GM18951 (cell line): ENCODE measurements at regions of chr4 and their contacts with region 1.

Region 1: GRCh38 chr4:159446266-159446976 is 343.5 kb downstream of the RAPGEF2 start:
- POLR2A ChIP-seq: no peak

Region 2: DNA sequence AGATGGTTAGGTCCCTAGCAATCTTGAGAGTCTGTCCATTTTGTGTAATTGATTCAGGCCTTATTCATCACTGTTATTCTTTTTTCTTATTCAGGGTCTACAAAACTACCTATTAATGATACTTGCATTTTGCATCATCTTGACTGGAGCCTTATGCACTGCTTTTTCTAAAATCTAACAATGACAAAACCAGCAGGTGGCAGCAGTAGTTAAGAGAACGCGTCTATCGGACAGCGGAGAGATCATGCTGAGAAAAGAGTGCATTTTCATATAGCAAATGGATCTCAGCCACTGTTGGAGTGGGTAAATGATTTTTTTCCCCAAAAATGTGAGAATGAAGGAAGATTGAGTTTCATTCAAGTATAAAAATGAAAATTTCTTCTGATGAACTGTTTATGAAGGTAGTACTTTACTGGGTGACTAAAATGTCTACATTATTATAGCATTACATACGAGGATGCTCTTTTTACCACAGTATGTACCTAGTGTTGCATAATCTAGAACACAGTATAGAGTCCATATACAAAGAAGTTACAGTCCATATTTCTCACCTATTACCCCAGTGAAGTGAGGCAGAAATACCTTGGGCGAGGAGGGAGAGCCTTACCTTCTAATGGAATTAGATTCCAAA is 1193.0 kb before region 1 on chr4:
- in situ Hi-C with region 1: loop called (anchors 25 kb)
- POLR2A ChIP-seq: no peak

Region 3: GRCh38 chr4:158729716-158730559 is 716.5 kb before region 1 on chr4:
- in situ Hi-C with region 1: loop called (anchors 25 kb)
- POLR2A ChIP-seq: no peak

Region 4: DNA sequence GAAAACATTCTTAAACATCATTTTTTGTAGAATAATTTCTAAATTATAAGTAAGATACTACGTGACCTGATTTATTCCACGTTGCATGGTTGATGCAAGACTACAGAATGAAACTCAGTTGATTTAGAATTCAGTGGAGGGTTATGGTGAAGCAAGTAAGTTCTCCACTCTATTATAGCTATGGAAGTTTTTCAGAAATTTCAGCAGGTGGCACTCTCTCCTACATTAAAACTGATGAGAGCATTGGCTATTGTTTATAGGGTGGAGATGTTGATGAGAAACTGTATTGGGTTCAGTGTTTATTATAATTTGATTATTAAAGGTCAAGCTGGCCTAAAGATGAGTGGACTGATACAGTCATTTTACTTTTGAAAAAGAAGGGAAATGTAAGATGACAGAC is 589.6 kb before region 1 on chr4:
- in situ Hi-C with region 1: loop called (anchors 25 kb)
- POLR2A ChIP-seq: no peak

Region 5: GRCh38 chr4:159232465-159233106 is 213.8 kb before region 1 on chr4:
- in situ Hi-C with region 1: no loop called
- POLR2A ChIP-seq: no peak

Region 6: GRCh38 chr4:159639671-159640323 is 193.4 kb after region 1 on chr4:
- in situ Hi-C with region 1: no loop called
- POLR2A ChIP-seq: no peak